ENCODE measurements at regions of chr10 and their contacts with region 1.

Region 1: DNA sequence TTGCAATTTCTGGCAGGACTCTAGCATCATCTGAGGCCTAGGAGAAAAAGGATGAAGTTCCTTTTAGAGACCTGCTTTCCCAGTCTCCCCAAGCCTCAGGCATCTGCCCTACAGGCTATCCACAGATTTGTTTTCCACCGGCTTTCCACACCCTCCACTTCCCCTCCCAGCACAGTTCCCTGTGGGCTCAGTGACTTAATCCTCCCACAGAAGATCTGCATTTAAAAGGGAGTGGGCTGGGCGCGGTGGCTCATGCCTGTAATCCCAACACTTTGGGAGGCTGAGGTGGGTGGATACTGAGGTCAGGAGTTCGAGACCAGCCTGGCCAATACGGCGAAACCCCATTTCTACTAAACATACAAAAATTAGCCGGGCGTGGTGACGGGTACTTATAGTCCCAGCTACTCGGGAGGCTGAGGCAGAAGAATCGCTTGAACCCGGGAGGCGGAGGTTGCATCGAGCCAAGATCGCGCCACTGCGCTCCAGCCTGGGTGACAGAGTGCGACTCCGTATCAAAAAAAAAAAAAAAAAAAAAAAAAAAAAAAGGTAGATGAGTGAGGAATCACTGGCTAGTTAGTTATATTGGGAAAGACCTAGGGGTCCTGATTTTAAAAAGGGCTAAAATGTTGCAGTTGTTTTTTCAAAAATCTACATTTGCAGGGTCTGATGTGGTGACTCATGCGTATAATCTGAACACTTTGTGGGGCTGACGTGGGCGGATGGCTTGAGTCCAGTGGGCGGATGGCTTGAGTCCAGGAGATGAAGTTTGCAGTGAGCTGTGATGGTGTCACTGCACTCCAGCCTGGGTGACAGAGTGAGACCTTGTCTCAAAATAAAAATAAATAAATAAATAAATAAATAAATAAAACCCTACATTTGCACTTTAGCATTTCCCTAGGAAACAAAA is 119.5 kb downstream of the BAMBI start:
- DNase-seq: no peak
- H3K4me3 ChIP-seq: no peak overlapping the region
- H3K4me3 Mint-ChIP-seq: no peak overlapping the region
- H3K27ac Mint-ChIP-seq: no peak overlapping the region
- H3K4me1 ChIP-seq: peaks cover 14% of the 10 kb centered on the region
- H3K4me1 Mint-ChIP-seq: peaks cover 7% of the 10 kb centered on the region
- H3K27me3 ChIP-seq: no peaks in the 10 kb centered on the region
- H3K27me3 Mint-ChIP-seq: no peaks in the 10 kb centered on the region
- CTCF ChIP-seq: no peak

Region 2: DNA sequence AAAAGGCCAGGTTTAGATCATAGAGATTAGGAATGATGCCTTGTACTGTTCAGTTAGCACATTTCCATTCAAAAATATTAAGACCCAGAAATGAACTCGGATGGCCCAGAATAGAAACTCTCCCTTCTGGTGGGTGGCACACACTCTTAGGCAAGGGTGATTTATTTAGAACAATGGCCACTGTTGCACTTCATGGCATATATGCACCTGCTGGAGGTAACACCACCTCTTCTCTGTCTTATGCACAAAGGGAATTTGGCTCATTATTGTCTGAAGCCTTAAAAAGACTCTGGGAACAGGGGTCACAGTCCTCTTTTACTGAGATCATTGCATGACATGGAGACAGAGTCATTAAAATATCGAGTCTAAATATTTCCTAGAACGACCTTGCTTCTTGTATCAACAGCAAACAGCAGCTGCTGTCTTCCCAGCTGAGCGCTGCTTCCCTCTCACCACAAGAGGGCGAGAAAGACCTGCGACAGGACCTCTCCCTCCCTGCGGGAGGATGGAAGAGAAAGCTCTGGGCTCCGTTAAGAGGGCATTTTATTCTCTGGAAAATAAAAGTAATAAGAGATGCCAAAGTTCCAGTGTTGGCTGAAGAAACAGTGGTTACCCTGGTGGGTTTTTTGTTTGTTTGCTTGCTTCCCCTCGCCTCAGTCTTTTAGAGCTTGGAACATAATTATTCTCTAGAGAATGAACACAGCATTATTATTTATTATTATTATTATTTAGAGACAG is 133.1 kb before region 1 on chr10:
- CTCF ChIA-PET with region 1: no interaction called
- POLR2A ChIA-PET with region 1: no interaction called
- intact Hi-C with region 1: no loop called
- DNase-seq: peak; percentile 88 to 90
- H3K4me3 ChIP-seq: no peak overlapping the region
- H3K4me3 Mint-ChIP-seq: no peak overlapping the region
- H3K27ac Mint-ChIP-seq: no peak overlapping the region
- H3K4me1 ChIP-seq: peaks cover 12% of the 10 kb centered on the region
- H3K4me1 Mint-ChIP-seq: peaks cover 34% of the 10 kb centered on the region
- H3K27me3 ChIP-seq: no peaks in the 10 kb centered on the region
- H3K27me3 Mint-ChIP-seq: peaks cover 3% of the 10 kb centered on the region
- CTCF ChIP-seq: peak; percentile 99

Region 3: GRCh38 chr10:28714402-28715053 is 82.3 kb before region 1 on chr10:
- CTCF ChIA-PET with region 1: no interaction called
- POLR2A ChIA-PET with region 1: interaction called, 10 read pairs
- intact Hi-C with region 1: no loop called
- DNase-seq: no peak
- H3K4me3 ChIP-seq: no peak overlapping the region
- H3K4me3 Mint-ChIP-seq: no peak overlapping the region
- H3K27ac Mint-ChIP-seq: no peak overlapping the region
- H3K4me1 ChIP-seq: peaks cover 3% of the 10 kb centered on the region; the same call in 1 of the 2 replicates
- H3K4me1 Mint-ChIP-seq: peaks cover 17% of the 10 kb centered on the region
- H3K27me3 ChIP-seq: no peaks in the 10 kb centered on the region
- H3K27me3 Mint-ChIP-seq: no peaks in the 10 kb centered on the region
- CTCF ChIP-seq: peak in 1 of 2 experiments; percentile 9

Measured in Caco-2 (cell line).